ENCODE measurements at regions of chr15 and their contacts with region 1.

Region 1: DNA sequence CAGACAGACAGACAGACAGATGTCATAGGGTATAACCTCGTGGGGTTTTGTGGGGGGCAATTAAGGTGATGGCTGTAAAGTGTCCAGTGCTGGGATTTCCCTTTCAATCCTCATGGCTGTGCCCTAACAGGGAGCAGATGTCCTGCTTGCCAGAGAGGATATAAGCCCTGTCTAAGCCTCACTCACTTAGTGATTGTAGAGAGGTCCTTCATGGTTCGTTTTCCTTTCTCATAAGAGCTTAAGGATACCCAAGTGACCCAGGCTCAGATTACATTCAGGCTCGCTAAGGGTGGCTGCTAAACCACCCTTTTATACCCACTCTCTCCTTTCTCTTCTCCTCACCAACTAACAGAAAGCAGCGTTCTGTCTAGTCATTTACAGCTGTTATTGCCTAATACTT is 19.2 kb downstream of the LYSMD2 start:
- DNase-seq: no peak
- H3K4me3 ChIP-seq: no peak overlapping the region
- H3K4me3 Mint-ChIP-seq: no peak overlapping the region
- H3K27ac ChIP-seq: peak overlapping the region in 1 of 2 donors; percentile 15
- H3K27ac Mint-ChIP-seq: peak overlapping the region in 2 of 7 donors; percentile 46 to 48
- H3K4me1 ChIP-seq: no peaks in the 10 kb centered on the region
- H3K4me1 Mint-ChIP-seq: peaks cover 4% of the 10 kb centered on the region
- H3K27me3 ChIP-seq: no peaks in the 10 kb centered on the region
- H3K27me3 Mint-ChIP-seq: peaks cover 0 to 3% (median 0%) of the 10 kb centered on the region in 3 donors
- CTCF ChIP-seq: no peak

Region 2: DNA sequence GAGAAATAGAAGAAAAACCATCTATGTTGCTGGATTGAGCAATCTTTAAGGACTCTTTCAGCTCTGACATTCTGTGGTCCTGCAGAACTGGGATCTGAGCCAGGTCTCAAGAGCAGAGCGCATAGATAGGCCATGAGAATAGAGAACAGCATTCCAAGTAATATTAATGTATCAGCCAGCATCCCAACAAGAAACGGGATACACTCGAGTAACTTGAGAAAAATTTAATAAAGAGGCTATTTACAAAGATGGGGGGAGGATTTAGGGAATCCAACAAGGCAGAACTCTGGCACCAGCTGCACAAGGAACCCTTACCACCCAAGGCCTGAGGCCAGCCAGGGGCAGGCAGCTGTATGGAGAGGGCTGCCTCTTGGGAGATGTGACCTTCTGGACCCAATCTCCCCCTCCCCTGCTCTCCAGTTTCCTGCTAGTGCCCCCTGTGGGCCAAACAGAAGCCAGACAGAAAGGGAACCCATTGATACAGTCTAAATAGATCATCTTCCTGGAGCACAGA is 41.4 kb after region 1 on chr15:
- intact Hi-C with region 1: loop called in 1 of 2 experiments (anchors 10 kb)
- DNase-seq: no peak
- H3K4me3 ChIP-seq: no peak overlapping the region
- H3K4me3 Mint-ChIP-seq: no peak overlapping the region
- H3K27ac ChIP-seq: no peak overlapping the region
- H3K27ac Mint-ChIP-seq: peak overlapping the region in 3 of 7 donors; percentile 7 to 25 (median 10)
- H3K4me1 ChIP-seq: peaks cover 54 to 55% of the 10 kb centered on the region in 2 donors
- H3K4me1 Mint-ChIP-seq: peaks cover 59% of the 10 kb centered on the region
- H3K27me3 ChIP-seq: no peaks in the 10 kb centered on the region
- H3K27me3 Mint-ChIP-seq: peaks cover 0 to 4% (median 0%) of the 10 kb centered on the region in 3 donors
- CTCF ChIP-seq: peak; percentile 25

Region 3: GRCh38 chr15:51935466-51936104 is 217.4 kb after region 1 on chr15:
- intact Hi-C with region 1: no loop called
- DNase-seq: no peak
- H3K4me3 ChIP-seq: no peak overlapping the region
- H3K4me3 Mint-ChIP-seq: no peak overlapping the region
- H3K27ac ChIP-seq: no peak overlapping the region
- H3K27ac Mint-ChIP-seq: peak overlapping the region in 5 of 7 donors; percentile 8 to 42 (median 33)
- H3K4me1 ChIP-seq: no peaks in the 10 kb centered on the region
- H3K4me1 Mint-ChIP-seq: no peaks in the 10 kb centered on the region
- H3K27me3 ChIP-seq: no peaks in the 10 kb centered on the region
- H3K27me3 Mint-ChIP-seq: peaks cover 0 to 2% (median 0%) of the 10 kb centered on the region in 3 donors
- CTCF ChIP-seq: no peak